IMR-90 (cell line): ENCODE measurements at regions of chr4 and their contacts with region 1.

Region 1: DNA sequence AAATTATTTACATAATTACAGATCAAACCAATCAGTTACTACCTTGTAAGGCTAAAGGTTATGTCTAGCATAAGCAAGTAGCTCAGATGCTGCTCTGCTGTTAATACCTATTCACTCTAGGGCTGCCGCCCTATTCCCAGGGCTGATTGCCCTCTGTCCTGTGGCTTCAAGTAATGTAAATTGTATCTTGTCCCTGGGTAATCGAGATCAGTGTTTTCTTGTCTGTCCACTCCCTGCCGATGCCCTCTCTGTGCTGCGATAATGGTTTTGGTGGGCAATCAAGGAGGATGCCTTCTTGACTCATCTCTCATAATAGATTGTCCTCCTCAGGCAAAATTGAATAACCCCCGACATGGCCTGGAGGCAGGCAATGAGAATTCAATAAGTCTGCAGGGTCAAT is 641.0 kb upstream of the PITX2 start:
- DNase-seq: no peak
- ATAC-seq: no peak
- H3K4me3 ChIP-seq: no peak overlapping the region
- H3K27ac ChIP-seq: no peak overlapping the region
- H3K4me1 ChIP-seq: no peaks in the 10 kb centered on the region
- H3K27me3 ChIP-seq: peaks cover 5% of the 10 kb centered on the region
- CTCF ChIP-seq: no peak
- POLR2A ChIP-seq: no peak
- RAD21 ChIP-seq: no peak

Region 2: DNA sequence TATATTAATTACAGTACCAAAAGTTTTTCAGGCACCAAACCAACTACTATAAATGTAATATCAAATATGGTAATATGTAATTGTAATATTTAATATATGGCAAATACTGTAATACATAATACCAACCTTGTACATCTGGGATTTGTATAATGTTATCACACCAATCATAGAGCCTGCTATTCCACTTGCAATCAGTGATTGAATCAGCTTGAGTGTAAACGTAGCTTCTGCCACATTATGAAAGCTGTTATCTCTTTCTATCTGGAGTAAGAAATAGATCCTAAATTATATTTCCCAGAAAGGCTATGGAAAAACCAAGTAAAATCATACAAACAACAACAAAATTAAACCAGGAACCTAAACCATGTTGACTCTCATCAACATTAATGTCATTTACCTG is 1276.9 kb after region 1 on chr4:
- CTCF ChIA-PET with region 1: no interaction called
- POLR2A ChIA-PET with region 1: no interaction called
- dilution Hi-C with region 1: no loop called
- in situ Hi-C with region 1: no loop called
- intact Hi-C with region 1: loop called (anchors 5 kb)
- DNase-seq: no peak
- ATAC-seq: no peak
- H3K4me3 ChIP-seq: no peak overlapping the region
- H3K27ac ChIP-seq: no peak overlapping the region
- H3K4me1 ChIP-seq: 0 out of 2 replicates have a peak, but pooled peaks cover 1% of the 10 kb centered on the region
- H3K27me3 ChIP-seq: no peaks in the 10 kb centered on the region
- CTCF ChIP-seq: no peak
- POLR2A ChIP-seq: no peak
- RAD21 ChIP-seq: no peak